ENCODE measurements at regions of chrX and their contacts with region 1.

Region 1: DNA sequence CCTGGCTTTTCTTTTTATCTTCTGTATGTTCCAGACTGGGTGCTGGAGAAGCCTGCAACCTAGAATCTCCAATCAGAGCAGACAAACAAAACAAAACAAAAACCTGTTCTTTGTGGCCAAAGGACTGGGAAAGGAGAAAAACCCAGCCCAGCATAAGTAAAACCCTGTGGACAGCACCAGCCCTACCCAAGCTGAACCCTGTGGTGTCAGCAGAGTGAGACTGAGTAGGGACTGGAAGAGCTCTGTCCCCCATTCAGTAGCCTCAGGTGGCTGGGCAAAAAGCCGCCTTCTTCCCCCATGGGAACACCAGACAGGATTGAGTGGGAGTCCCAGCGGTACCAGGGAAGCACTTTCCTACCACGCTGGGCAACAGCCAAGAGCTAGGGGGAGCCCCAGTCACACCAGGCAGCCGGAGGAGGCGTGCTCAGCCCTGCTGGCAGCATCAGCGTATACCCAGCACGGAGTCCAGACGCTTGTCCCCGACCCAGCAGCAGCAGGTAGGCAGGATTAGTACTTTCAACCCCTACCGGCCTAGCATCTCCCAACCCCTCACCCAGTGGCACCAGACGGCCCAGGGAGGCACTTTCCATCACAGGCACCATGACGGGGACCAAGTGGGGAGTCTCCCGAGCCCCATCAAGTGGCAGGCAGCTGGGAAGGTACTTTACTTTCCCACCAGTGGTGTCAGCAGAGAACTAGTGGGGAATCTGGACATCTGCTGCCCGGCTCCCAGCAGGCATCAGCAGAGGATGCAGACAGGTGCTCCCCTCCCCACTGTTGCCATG is 8.6 kb upstream of the JADE3 start:
- DNase-seq: peak; percentile 24
- H3K4me3 Mint-ChIP-seq: peak overlapping the region; percentile 39
- H3K27ac Mint-ChIP-seq: no peak overlapping the region
- H3K4me1 Mint-ChIP-seq: no peaks in the 10 kb centered on the region
- H3K27me3 Mint-ChIP-seq: peaks cover 14% of the 10 kb centered on the region

Region 2: GRCh38 chrX:46788902-46789301 is 114.7 kb before region 1 on chrX:
- intact Hi-C with region 1: no loop called
- DNase-seq: no peak
- H3K4me3 Mint-ChIP-seq: no peak overlapping the region
- H3K27ac Mint-ChIP-seq: no peak overlapping the region
- H3K4me1 Mint-ChIP-seq: peaks cover 18% of the 10 kb centered on the region
- H3K27me3 Mint-ChIP-seq: no peaks in the 10 kb centered on the region

Region 3: GRCh38 chrX:46873746-46874145 is 29.9 kb before region 1 on chrX:
- intact Hi-C with region 1: no loop called
- DNase-seq: no peak
- H3K4me3 Mint-ChIP-seq: no peak overlapping the region
- H3K27ac Mint-ChIP-seq: no peak overlapping the region
- H3K4me1 Mint-ChIP-seq: no peaks in the 10 kb centered on the region
- H3K27me3 Mint-ChIP-seq: no peaks in the 10 kb centered on the region

Region 4: GRCh38 chrX:46929439-46930261 is 26.0 kb after region 1 on chrX:
- intact Hi-C with region 1: no loop called
- DNase-seq: no peak
- H3K4me3 Mint-ChIP-seq: no peak overlapping the region
- H3K27ac Mint-ChIP-seq: no peak overlapping the region
- H3K4me1 Mint-ChIP-seq: no peaks in the 10 kb centered on the region
- H3K27me3 Mint-ChIP-seq: peaks cover 2% of the 10 kb centered on the region

Region 5: DNA sequence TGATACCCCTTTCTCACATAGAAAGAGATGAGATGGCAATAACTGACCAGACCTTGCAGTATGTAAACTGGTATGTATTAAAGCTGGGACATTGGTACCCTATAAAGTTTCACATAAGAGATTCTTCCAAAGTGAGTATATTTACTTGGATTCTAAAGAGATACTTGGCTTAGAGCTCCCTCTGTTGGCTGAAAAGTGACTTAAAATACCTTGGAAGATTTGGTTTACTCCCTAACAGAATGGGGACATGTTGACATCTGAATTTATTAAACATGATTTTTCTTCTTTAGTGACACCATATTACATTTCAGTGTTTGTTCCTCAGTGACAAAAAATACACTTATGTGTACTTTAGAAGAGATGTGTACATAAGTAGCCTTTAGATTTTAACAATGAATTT is 126.7 kb after region 1 on chrX:
- intact Hi-C with region 1: loop called (anchors 2 kb)
- DNase-seq: no peak
- H3K4me3 Mint-ChIP-seq: no peak overlapping the region
- H3K27ac Mint-ChIP-seq: no peak overlapping the region
- H3K4me1 Mint-ChIP-seq: no peaks in the 10 kb centered on the region
- H3K27me3 Mint-ChIP-seq: no peaks in the 10 kb centered on the region